Heart left ventricle (tissue), 16 donors: ENCODE measurements at regions of chr2 and their contacts with region 1.

Region 1: DNA sequence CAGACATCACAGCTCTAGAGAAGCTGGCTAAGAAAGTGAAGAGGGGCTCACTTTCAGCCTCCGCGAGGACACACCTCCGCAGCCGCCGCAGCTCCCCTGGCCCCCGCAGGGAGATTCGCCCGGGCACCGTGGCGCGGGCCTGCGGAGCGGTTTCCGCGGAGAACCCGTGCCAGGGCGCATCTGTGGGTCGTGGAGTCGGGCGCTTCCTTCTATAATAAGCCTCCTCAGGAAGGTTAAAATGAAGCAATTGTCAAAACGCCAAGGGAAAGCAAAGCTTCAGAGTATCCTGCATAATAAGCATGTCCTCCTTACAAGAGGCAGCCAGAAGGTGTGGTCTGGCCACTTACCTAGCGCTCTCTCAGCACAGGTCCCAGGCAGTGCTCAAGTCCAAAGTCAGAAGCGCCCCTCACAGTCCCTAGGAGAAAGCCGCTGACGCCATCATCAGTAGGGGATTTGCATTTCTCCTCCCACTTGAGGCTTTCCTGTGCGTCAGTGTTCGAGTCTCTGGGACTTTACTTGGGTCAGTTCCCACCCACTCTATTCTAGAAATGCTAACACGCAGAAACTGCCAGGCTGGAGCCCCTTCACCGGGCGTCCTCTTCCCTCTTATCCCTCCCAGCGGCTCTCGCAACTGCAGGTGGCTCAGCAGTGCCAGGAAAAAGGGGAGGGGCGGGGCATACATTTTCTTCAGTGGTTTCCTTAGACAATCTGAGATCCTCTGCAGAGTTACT is at the start of gene STAT4:
- DNase-seq: peak; percentile 36 to 69 (median 42)
- ATAC-seq: peak; percentile 49 to 81 (median 65)
- H3K4me3 ChIP-seq: peak within 1 kb of the TSS; percentile 19 to 70 (median 54)
- H3K27ac ChIP-seq: peak within 1 kb of the TSS in 4 of 12 donors; percentile 40 to 83 (median 58)
- H3K4me1 ChIP-seq: peaks cover 0 to 17% (median 2%) of the 10 kb centered on the region in 12 donors
- H3K27me3 ChIP-seq: no peaks in the 10 kb centered on the region
- CTCF ChIP-seq: no peak
- POLR2A ChIP-seq: no peak
- total RNA-seq, gene STAT4: 0.32 to 21.5 (median 3.1) TPM

Region 2: DNA sequence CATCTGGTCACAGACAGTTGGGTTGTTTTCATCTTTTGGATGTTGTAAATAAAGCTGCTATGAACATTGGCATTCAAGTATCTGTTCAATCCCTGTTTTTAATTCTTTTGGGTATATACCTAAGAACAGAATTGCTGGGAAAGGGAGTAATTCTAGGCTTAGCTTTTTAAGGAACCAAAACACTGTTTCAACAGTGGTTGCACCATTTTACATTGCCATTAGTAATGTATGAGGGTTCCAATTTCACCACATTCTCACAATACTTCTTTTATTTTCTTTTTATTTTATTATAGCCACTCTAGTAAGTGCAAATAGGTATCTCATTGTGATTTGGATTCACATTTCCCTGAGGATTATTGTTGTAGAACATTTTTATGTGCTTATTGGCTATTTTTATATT is 379.0 kb before region 1 on chr2:
- intact Hi-C with region 1: loop called in 1 of 10 experiments (anchors 10 kb)
- DNase-seq: no peak
- ATAC-seq: no peak
- H3K4me3 ChIP-seq: no peak overlapping the region
- H3K27ac ChIP-seq: no peak overlapping the region
- H3K4me1 ChIP-seq: no peaks in the 10 kb centered on the region
- H3K27me3 ChIP-seq: no peaks in the 10 kb centered on the region
- CTCF ChIP-seq: no peak
- POLR2A ChIP-seq: no peak